ENCODE measurements at regions of chr3 and their contacts with region 1.

Region 1: GRCh38 chr3:11613851-11614487 is 29.7 kb downstream of the VGLL4 start:
- DNase-seq: no peak
- ATAC-seq: no peak
- H3K4me3 ChIP-seq: no peak overlapping the region
- H3K27ac ChIP-seq: no peak overlapping the region
- H3K4me1 ChIP-seq: peaks cover 47% of the 10 kb centered on the region
- H3K27me3 ChIP-seq: no peaks in the 10 kb centered on the region
- CTCF ChIP-seq: no peak
- POLR2A ChIP-seq: no peak
- RAD21 ChIP-seq: no peak

Region 2: DNA sequence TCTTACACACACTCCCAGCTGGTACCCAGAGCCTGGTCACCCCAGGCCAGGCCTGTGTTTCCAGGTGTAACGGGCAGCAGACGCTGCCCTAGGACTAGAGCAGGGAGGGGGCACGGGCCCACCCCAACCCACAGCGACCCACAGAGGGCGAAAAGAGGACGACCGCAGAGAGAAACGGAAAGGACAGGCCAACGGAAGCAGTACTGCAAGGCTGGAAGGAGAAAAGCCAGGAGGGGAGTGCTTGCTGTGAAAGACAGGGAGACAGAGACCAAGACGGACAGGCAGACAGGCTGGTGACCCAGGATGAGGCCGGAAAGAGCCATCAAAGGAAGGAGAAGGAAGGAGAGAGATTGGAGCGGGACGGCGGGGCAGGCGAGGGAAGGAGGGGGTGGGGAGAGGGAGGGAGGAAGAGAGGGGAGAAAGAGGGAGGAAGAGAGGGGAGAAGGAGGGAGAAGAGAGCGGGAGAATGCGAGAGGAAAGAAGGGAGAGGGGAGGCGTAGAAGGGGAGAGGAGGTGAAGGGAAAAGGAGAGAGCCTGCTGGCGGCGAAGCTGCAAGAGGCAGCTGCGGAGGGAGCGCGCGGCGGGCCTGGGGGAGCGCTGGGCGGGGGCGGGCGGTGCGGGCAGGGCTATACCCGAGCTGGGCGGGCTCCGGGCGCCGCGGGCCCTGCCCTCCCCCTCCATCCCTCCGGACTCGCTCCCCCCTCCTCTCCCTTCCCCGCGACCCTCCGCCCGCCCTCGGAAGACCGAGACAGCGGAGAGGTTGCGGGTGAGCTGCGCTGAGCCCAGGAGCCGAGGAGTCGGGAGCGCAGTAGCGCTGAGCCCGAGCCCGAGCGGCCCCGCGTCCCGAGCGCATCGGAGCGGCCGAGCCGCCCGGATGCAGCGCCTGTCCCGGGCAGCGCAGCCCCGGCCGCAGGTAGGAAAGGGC is 621.7 kb before region 1 on chr3 and contains the start of gene SLC6A1:
- CTCF ChIA-PET with region 1: no interaction called
- POLR2A ChIA-PET with region 1: no interaction called
- dilution Hi-C with region 1: no loop called
- in situ Hi-C with region 1: no loop called
- intact Hi-C with region 1: no loop called
- DNase-seq: no peak
- ATAC-seq: peak; percentile 62
- H3K4me3 ChIP-seq: 0 out of 2 replicates have a peak within 1 kb of the TSS, but pooled peaks have one; percentile 32
- H3K27ac ChIP-seq: no peak within 1 kb of the TSS
- H3K4me1 ChIP-seq: no peaks in the 10 kb centered on the region
- H3K27me3 ChIP-seq: peaks cover 69% of the 10 kb centered on the region
- CTCF ChIP-seq: no peak
- POLR2A ChIP-seq: no peak
- RAD21 ChIP-seq: no peak
- total RNA-seq, gene SLC6A1: not detected in 2 replicates

Region 3: DNA sequence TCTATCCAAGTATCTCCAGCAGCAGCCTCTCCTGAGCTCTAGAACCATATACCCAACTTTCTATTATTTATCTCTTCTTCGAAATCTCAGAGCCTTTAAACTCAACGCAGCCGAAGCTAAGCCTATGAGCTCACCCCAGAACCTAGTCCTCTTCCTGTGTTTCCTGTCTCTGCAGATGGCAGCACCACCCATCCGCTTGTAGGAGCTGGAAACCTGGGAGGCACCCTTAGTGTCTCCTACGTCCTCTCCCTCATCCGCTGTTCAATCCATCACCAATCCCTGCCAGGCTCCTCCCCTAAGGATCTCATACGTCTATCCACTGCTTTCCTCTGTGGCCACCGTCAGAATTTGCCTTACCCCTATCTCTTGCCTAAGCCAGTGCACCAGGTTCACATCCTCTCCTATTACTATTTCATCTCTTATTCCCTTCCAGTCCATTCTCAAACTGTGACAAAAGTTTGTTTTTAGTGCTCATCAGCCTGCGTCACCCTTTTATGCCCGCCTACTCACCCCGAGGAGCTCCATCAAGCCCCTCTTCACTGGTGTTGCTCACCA is 20.2 kb after region 1 on chr3:
- CTCF ChIA-PET with region 1: no interaction called
- POLR2A ChIA-PET with region 1: interaction called, 4 read pairs
- dilution Hi-C with region 1: no loop called
- in situ Hi-C with region 1: no loop called
- intact Hi-C with region 1: loop called (anchors 2 kb)
- DNase-seq: no peak
- ATAC-seq: no peak
- H3K4me3 ChIP-seq: no peak overlapping the region
- H3K27ac ChIP-seq: no peak overlapping the region
- H3K4me1 ChIP-seq: peaks cover 41% of the 10 kb centered on the region
- H3K27me3 ChIP-seq: no peaks in the 10 kb centered on the region
- CTCF ChIP-seq: no peak
- POLR2A ChIP-seq: no peak
- RAD21 ChIP-seq: no peak

Region 4: GRCh38 chr3:11770477-11771391 is 156.8 kb after region 1 on chr3:
- CTCF ChIA-PET with region 1: no interaction called
- POLR2A ChIA-PET with region 1: no interaction called
- dilution Hi-C with region 1: no loop called
- in situ Hi-C with region 1: no loop called
- intact Hi-C with region 1: no loop called
- DNase-seq: peak; percentile 87
- ATAC-seq: peak; percentile 93
- H3K4me3 ChIP-seq: no peak overlapping the region
- H3K27ac ChIP-seq: no peak overlapping the region
- H3K4me1 ChIP-seq: peaks cover 4% of the 10 kb centered on the region
- H3K27me3 ChIP-seq: peaks cover 7% of the 10 kb centered on the region
- CTCF ChIP-seq: no peak
- POLR2A ChIP-seq: no peak
- RAD21 ChIP-seq: no peak